H1 (cell line): ENCODE measurements at regions of chr15 and their contacts with region 1.

Region 1: DNA sequence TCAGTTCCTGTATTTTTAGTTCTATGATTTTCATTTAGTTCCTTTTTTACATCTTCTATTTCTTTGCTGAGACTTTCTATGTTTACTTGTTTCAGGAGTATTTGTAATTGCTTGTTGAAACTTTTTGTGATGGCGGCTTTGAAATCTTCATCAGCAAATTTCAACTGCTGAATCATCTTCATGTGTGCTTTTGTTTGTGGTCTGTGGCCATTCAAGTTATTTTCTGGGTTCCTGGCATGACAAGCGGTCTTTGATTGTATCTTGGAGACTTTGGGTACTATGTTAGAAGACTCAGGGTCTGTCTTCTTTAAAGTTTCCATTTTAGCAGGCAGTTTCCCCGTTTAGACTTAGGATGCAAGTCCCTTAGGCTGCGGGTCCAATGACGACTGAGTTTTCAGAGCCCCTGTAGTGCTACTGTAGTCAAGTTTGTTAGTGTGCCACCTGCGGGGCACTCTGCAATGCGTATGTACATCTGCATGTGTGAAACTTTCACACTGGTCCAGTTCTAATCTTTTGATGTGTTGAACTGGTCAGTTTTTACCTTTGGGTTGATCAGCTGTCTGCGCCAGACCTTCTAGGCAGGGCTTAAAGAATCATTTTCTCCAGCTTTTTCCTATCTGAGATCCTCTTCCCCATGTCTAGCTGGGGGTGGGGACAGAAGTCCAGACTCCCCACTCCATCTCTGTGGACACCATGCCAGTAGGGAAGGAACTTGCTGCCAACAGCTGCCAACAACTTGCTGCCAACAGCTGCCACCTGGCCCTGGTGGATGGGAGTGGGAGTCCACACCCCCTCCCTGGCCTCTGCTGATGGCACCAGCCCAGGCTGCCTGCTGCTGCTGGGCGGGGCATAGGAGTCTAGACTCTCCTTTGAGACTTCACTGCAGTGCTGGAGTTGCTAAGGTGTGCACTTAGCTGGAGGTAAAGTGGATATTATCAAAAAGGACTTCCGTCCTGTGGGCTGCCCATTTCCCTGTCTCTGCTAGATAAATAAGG is 190.9 kb downstream of the TJP1 start:
- DNase-seq: peak in 1 of 2 experiments; percentile 43
- H3K4me3 ChIP-seq: no peak overlapping the region
- H3K27ac ChIP-seq: no peak overlapping the region
- H3K4me1 ChIP-seq: peaks cover 3 to 8% (median 5%) of the 10 kb centered on the region in 4 experiments; a peak in 5 of 7 replicates
- H3K27me3 ChIP-seq: no peaks in the 10 kb centered on the region
- CTCF ChIP-seq: no peak
- EP300 ChIP-seq: no peak
- POLR2A ChIP-seq: no peak
- RAD21 ChIP-seq: no peak

Region 2: DNA sequence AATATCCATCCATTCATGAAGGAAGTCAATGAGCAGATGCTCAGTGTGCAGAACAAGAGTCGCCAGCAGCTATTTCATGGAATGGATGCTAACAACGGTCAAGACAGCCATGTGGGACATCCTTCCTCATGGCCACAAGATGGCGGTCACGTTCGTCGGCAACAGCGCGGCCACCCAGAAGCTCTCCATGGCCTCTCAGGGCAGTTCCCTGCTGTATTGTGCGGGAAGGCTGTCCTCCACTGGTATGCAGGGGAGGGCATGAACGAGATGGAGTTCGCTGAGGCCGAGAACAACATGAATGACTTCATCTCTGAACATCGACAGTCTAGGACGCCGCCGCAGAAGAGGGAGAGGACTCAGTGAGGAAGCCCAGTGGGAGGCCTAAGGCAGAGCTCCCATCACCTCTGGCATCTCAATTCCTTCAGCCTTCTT is 17.4 kb before region 1 on chr15:
- CTCF ChIA-PET with region 1: interaction called, 58 read pairs
- POLR2A ChIA-PET with region 1: no interaction called
- DNase-seq: peak in 1 of 2 experiments; percentile 67
- H3K4me3 ChIP-seq: no peak overlapping the region
- H3K27ac ChIP-seq: no peak overlapping the region
- H3K4me1 ChIP-seq: peaks cover 3 to 16% (median 12%) of the 10 kb centered on the region in 4 experiments; a peak in 5 of 7 replicates
- H3K27me3 ChIP-seq: no peaks in the 10 kb centered on the region; a peak in 1 of 7 replicates
- CTCF ChIP-seq: peak; percentile 56 to 79 (median 75)
- EP300 ChIP-seq: no peak
- POLR2A ChIP-seq: no peak
- RAD21 ChIP-seq: peak; percentile 53 to 68

Region 3: DNA sequence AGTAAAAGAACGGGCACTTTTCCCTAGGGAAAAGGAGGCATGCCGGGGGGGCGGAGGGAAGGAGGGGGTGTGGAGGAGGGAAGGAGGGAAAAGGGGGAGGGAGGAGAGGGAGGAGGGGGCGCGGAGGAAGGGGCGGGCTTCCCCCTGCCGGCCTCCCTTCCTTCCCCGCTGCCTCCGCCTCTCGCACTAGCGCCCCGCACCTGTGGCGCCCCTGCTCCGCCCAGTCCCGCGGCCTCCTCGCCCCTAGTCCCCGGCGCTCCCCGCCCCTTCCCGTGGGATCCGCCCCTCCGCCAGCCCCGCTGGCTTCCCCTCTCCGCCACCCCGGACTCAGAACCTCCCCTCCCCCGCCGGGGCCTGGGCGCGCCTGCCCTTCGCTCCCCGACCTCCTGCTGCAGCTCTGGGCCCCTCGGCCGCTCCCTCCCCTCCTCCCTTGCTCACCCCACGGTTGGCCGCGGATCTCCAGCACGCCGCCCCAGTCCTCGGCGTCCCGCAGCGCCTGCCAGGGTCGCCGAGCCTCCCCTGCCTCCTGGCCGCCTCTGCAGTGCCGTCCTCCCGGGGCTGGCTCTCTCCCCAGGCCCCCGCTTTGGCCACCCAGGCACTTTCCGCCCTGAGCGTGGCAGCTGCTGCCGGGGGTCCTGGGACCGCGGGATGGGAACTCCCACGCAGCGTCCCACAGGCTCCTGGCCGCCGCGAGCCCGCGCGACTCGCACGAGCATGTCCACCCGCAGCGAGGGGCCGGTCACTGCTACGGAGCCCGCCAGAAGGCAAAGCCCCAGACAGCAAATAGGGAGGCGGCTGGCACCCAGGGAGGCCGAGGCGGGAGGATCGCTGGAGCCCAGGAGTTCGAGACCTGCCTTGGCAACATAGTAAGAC is 43.5 kb after region 1 on chr15:
- CTCF ChIA-PET with region 1: no interaction called
- POLR2A ChIA-PET with region 1: no interaction called
- DNase-seq: peak; percentile 73 to 93
- H3K4me3 ChIP-seq: peak overlapping the region; percentile 57 to 94 (median 62)
- H3K27ac ChIP-seq: no peak overlapping the region; the same call in 1 of the 2 replicates
- H3K4me1 ChIP-seq: peaks cover 0 to 13% (median 1%) of the 10 kb centered on the region in 4 experiments; a peak in 6 of 7 replicates
- H3K27me3 ChIP-seq: no peaks in the 10 kb centered on the region
- CTCF ChIP-seq: no peak
- EP300 ChIP-seq: no peak
- POLR2A ChIP-seq: no peak; a peak in 1 of 3 replicates
- RAD21 ChIP-seq: no peak; a peak in 1 of 4 replicates